Natural killer cell (primary cell): ENCODE measurements at regions of chr7 and their contacts with region 1.

Region 1: DNA sequence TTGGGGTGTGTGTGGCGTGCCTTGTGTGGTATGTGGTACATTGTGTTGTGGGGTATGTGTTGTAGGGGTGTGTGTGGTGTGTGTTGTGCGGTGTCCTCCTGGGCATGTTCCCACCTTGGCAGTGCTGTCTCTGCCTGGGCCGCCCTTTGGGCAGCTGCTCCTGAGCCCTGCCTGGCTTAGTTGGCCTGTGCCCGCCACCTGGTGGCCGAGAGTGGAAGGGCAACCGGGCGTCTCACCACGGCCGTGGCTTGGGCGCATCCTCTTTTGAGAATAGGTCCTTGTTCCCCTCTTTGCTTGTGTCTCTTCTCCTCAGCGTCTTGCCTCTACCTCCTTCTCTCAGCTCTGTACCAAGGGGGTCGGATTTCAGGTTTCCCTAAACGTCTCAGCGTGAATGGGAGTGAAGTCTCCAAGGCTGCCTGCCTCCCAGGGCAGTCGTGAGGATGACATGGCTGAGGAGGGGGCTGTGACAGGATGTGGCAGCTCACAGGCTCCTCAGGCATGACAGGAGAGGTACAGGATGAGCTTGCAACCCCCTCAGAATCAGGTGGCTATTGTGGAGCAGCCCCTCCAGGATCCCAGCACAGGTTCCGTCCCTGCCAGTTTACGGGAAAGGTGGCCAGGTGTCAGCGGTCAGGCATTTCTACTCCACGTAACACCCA is 98.4 kb upstream of the PODXL start:
- DNase-seq: peak; percentile 80 to 82
- ATAC-seq: peak; percentile 76 to 100 (median 98)
- H3K4me3 ChIP-seq: no peak overlapping the region
- H3K4me3 Mint-ChIP-seq: no peak overlapping the region
- H3K27ac ChIP-seq: no peak overlapping the region
- H3K27ac Mint-ChIP-seq: no peak overlapping the region
- H3K4me1 ChIP-seq: no peaks in the 10 kb centered on the region
- H3K4me1 Mint-ChIP-seq: peaks cover 0 to 8% of the 10 kb centered on the region in 2 donors
- H3K27me3 ChIP-seq: no peaks in the 10 kb centered on the region
- H3K27me3 Mint-ChIP-seq: peaks cover 0 to 5% of the 10 kb centered on the region in 2 donors
- CTCF ChIP-seq: peak; percentile 73

Region 2: GRCh38 chr7:131507592-131508331 is 147.0 kb before region 1 on chr7:
- intact Hi-C with region 1: loop called (anchors 1 kb)
- DNase-seq: peak; percentile 78 to 87
- ATAC-seq: peak; percentile 88 to 98 (median 95)
- H3K4me3 ChIP-seq: no peak overlapping the region
- H3K4me3 Mint-ChIP-seq: no peak overlapping the region
- H3K27ac ChIP-seq: no peak overlapping the region
- H3K27ac Mint-ChIP-seq: no peak overlapping the region
- H3K4me1 ChIP-seq: peaks cover 6% of the 10 kb centered on the region
- H3K4me1 Mint-ChIP-seq: peaks cover 10 to 24% of the 10 kb centered on the region in 2 donors
- H3K27me3 ChIP-seq: no peaks in the 10 kb centered on the region
- H3K27me3 Mint-ChIP-seq: peaks cover 10 to 12% of the 10 kb centered on the region in 2 donors
- CTCF ChIP-seq: peak; percentile 84

Region 3: DNA sequence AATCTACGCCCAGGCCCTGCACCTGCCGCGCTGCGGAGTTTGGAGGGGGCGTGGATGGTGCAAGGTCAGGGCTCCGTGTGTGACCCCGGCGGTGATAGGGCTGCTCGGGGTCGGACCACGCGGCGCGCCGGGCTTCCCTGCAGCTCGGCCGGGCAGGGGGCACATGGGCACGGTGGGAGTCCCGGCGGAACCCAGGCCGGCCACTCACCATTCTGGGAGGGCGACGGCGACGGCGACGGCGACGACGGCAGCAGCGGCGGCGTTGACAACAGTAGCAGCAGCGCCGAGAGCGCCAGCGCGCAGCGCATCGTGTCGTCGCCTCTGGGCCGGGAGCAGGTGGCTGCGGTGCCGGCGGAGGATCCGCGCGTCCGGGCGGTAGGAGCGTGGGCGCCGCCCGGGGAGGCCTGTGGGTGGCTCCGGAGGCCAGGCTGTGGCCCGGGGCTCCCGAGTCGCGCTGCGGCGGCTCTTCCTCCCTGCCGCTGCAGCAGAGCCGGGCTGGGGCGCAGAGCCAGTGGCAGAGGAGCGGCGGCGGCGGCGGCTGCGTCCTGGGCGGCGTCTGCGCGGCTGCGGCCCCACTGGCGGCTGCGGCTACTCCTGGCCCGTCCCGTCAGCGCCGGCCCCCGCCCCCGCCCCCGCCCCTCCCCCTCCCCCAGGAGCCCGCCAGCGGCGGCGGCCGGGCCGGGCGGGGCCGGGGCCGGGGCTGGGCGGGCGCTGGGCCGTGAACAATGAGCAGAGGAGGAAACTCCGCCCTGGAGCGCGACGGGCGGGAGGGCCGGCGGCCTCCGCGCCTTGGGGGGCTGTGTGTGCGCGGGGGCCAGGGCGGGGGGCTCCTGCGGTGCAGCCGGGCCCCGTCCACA is 98.5 kb before region 1 on chr7 and contains the start of gene PODXL:
- intact Hi-C with region 1: loop called (anchors 5 kb)
- DNase-seq: peak; percentile 57 to 70
- ATAC-seq: peak; percentile 81 to 85 (median 83)
- H3K4me3 ChIP-seq: peak within 1 kb of the TSS; percentile 40
- H3K4me3 Mint-ChIP-seq: peak within 1 kb of the TSS; percentile 83
- H3K27ac ChIP-seq: no peak within 1 kb of the TSS
- H3K27ac Mint-ChIP-seq: no peak within 1 kb of the TSS
- H3K4me1 ChIP-seq: peaks cover 23% of the 10 kb centered on the region
- H3K4me1 Mint-ChIP-seq: peaks cover 12 to 13% of the 10 kb centered on the region in 2 donors
- H3K27me3 ChIP-seq: peaks cover 34% of the 10 kb centered on the region
- H3K27me3 Mint-ChIP-seq: peaks cover 25 to 32% of the 10 kb centered on the region in 2 donors
- CTCF ChIP-seq: no peak
- total RNA-seq, gene PODXL: 0.35 to 1.4 (median 0.88) TPM

Region 4: GRCh38 chr7:131767591-131767990 is 112.8 kb after region 1 on chr7:
- intact Hi-C with region 1: no loop called
- DNase-seq: no peak
- ATAC-seq: no peak
- H3K4me3 ChIP-seq: no peak overlapping the region
- H3K4me3 Mint-ChIP-seq: no peak overlapping the region
- H3K27ac ChIP-seq: no peak overlapping the region
- H3K27ac Mint-ChIP-seq: no peak overlapping the region
- H3K4me1 ChIP-seq: no peaks in the 10 kb centered on the region
- H3K4me1 Mint-ChIP-seq: no peaks in the 10 kb centered on the region
- H3K27me3 ChIP-seq: no peaks in the 10 kb centered on the region
- H3K27me3 Mint-ChIP-seq: peaks cover 15 to 18% of the 10 kb centered on the region in 2 donors
- CTCF ChIP-seq: no peak

Region 5: GRCh38 chr7:132030086-132030568 is 375.3 kb after region 1 on chr7:
- intact Hi-C with region 1: no loop called
- DNase-seq: no peak
- ATAC-seq: no peak
- H3K4me3 ChIP-seq: no peak overlapping the region
- H3K4me3 Mint-ChIP-seq: no peak overlapping the region
- H3K27ac ChIP-seq: no peak overlapping the region
- H3K27ac Mint-ChIP-seq: no peak overlapping the region
- H3K4me1 ChIP-seq: no peaks in the 10 kb centered on the region
- H3K4me1 Mint-ChIP-seq: no peaks in the 10 kb centered on the region
- H3K27me3 ChIP-seq: no peaks in the 10 kb centered on the region
- H3K27me3 Mint-ChIP-seq: no peaks in the 10 kb centered on the region
- CTCF ChIP-seq: no peak